Vagina (tissue), 2 donors: ENCODE measurements at regions of chr1 and their contacts with region 1.

Region 1: GRCh38 chr1:64469977-64470664 is at the start of gene CACHD1:
- DNase-seq: no peak
- H3K4me3 ChIP-seq: peak within 1 kb of the TSS; percentile 57 to 81
- H3K27ac ChIP-seq: peak within 1 kb of the TSS; percentile 93
- H3K4me1 ChIP-seq: peaks cover 33% of the 10 kb centered on the region
- H3K27me3 ChIP-seq: no peaks in the 10 kb centered on the region
- CTCF ChIP-seq: peak in 2 of 3 experiments; percentile 5 to 60
- POLR2A ChIP-seq: no peak
- total RNA-seq, gene CACHD1: 27.7 TPM

Region 2: DNA sequence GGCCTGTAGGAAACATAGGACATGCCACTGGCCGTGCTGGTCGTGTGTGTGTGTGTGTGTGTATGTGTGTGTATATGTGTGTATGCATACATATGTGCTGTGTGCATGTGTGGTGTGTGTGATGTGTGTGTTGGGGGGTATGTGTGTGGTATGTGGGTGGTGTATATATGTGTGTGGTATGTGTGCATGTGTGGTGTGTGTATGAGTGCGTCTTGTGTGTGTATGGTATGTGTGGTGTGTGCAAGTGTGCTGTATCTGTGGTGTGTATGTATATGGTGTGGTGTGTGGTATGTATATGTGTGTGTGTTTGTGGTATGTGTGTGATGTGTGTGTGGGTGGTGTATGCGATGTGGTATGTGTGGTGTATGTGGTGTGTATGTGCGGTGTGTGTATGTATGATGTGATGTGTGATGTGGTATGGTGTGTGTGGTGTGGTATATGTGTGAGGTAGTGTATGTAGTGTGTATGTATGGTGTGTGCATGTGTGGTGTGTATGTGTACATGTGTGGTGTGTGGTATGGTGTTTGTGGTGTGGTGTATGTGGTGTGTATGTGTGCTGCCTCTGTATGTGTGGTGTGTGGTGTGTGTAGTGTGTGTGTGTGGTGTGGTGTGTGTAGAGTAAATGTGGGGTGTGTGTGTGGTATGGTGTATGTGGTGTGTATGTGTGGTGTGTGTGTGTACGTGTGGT is 121.0 kb before region 1 on chr1:
- intact Hi-C with region 1: no loop called
- DNase-seq: no peak
- H3K4me3 ChIP-seq: no peak overlapping the region
- H3K27ac ChIP-seq: no peak overlapping the region
- H3K4me1 ChIP-seq: peaks cover under 1% of the 10 kb centered on the region
- H3K27me3 ChIP-seq: no peaks in the 10 kb centered on the region
- CTCF ChIP-seq: no peak
- POLR2A ChIP-seq: no peak

Region 3: GRCh38 chr1:64421377-64421776 is 48.7 kb before region 1 on chr1:
- intact Hi-C with region 1: no loop called
- DNase-seq: no peak
- H3K4me3 ChIP-seq: no peak overlapping the region
- H3K27ac ChIP-seq: no peak overlapping the region
- H3K4me1 ChIP-seq: peaks cover 6% of the 10 kb centered on the region
- H3K27me3 ChIP-seq: no peaks in the 10 kb centered on the region
- CTCF ChIP-seq: no peak
- POLR2A ChIP-seq: no peak

Region 4: DNA sequence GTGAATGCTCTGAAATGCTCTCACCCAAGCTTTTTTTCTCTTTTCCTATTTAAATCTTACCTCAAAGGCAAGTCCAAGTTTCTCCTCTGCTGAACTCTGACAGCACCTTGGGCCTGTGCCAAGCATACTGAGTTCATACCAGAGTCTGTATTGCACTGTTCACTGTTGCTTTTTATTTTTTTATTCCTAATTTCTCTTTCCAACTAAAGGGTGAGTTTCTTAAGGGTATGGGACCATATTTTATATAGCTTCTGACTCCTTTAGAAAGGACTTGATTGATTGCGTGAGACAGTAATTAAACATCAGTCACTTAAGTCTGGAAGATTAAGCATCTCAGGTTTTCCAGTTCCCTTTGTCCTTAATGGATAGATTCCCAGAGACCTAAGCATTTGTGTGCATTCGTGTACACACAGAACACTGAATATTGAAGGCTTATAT is 69.7 kb after region 1 on chr1:
- intact Hi-C with region 1: loop called (anchors 10 kb)
- DNase-seq: no peak
- H3K4me3 ChIP-seq: peak overlapping the region; percentile 26 to 27
- H3K27ac ChIP-seq: peak overlapping the region; percentile 60
- H3K4me1 ChIP-seq: peaks cover 71% of the 10 kb centered on the region
- H3K27me3 ChIP-seq: no peaks in the 10 kb centered on the region
- CTCF ChIP-seq: no peak
- POLR2A ChIP-seq: no peak